GM12878 (cell line): ENCODE measurements at regions of chrX and their contacts with region 1.

Region 1: DNA sequence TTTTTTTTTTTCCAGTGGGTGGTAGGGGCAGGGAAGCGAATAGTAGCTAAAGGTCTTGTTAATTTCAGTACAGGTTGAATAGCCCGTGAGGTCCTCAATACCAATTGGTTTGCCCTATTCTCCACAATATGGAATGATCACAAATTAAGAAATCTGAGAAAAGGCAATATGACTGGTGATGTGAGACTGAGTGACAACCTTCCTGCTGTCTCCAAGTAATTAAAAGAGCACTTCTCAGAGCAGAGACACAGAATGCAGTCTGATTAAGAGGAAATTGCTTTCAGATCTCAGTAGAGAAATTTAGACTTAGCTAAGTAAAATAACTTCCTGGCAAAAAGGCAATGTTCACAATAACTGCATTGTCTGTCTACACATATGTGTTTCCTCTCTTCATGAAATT is 23.0 kb downstream of the GPR174 start:
- DNase-seq: no peak
- ATAC-seq: peak; percentile 24; the same call in 2 of the 3 replicates
- H3K4me3 ChIP-seq: no peak overlapping the region
- H3K27ac ChIP-seq: no peak overlapping the region
- H3K4me1 ChIP-seq: peaks cover 7% of the 10 kb centered on the region
- H3K27me3 ChIP-seq: no peaks in the 10 kb centered on the region
- CTCF ChIP-seq: no peak
- EP300 ChIP-seq: no peak
- POLR2A ChIP-seq: no peak
- RAD21 ChIP-seq: no peak

Region 2: GRCh38 chrX:79153348-79153747 is 14.1 kb before region 1 on chrX:
- CTCF ChIA-PET with region 1: interaction called, 5 read pairs
- POLR2A ChIA-PET with region 1: interaction called, 13 read pairs
- RAD21 ChIA-PET with region 1: interaction called, 21 read pairs
- SMC1A ChIA-PET with region 1: interaction called, 135 read pairs
- in situ Hi-C with region 1: no loop called
- intact Hi-C with region 1: no loop called
- DNase-seq: no peak
- ATAC-seq: peak; percentile 48
- H3K4me3 ChIP-seq: no peak overlapping the region
- H3K27ac ChIP-seq: peak overlapping the region; percentile 8; the same call in 1 of the 2 replicates
- H3K4me1 ChIP-seq: peaks cover 2% of the 10 kb centered on the region; the same call in 1 of the 2 replicates
- H3K27me3 ChIP-seq: no peaks in the 10 kb centered on the region
- CTCF ChIP-seq: no peak
- EP300 ChIP-seq: no peak
- POLR2A ChIP-seq: no peak
- RAD21 ChIP-seq: no peak